Activated CD8-positive, alpha-beta T cell treated with anti-CD3 and anti-CD28 coated beads for 36 hours (primary cell): ENCODE measurements at regions of chr19 and their contacts with region 1.

Region 1: GRCh38 chr19:51020988-51021651 is 1.6 kb upstream of the KLK10 start:
- DNase-seq: peak; percentile 38
- ATAC-seq: no peak
- H3K4me3 Mint-ChIP-seq: no peak overlapping the region
- H3K27ac Mint-ChIP-seq: no peak overlapping the region
- H3K4me1 Mint-ChIP-seq: peaks cover 14% of the 10 kb centered on the region
- H3K27me3 Mint-ChIP-seq: peaks cover 53% of the 10 kb centered on the region
- CTCF ChIP-seq: peak; percentile 55

Region 2: GRCh38 chr19:50912727-50913716 is 108.1 kb before region 1 on chr19:
- CTCF ChIA-PET with region 1: no interaction called
- POLR2A ChIA-PET with region 1: no interaction called
- intact Hi-C with region 1: no loop called
- DNase-seq: peak; percentile 70
- ATAC-seq: peak; percentile 72
- H3K4me3 Mint-ChIP-seq: no peak overlapping the region
- H3K27ac Mint-ChIP-seq: no peak overlapping the region
- H3K4me1 Mint-ChIP-seq: peaks cover 8% of the 10 kb centered on the region
- H3K27me3 Mint-ChIP-seq: peaks cover 38% of the 10 kb centered on the region
- CTCF ChIP-seq: no peak

Region 3: DNA sequence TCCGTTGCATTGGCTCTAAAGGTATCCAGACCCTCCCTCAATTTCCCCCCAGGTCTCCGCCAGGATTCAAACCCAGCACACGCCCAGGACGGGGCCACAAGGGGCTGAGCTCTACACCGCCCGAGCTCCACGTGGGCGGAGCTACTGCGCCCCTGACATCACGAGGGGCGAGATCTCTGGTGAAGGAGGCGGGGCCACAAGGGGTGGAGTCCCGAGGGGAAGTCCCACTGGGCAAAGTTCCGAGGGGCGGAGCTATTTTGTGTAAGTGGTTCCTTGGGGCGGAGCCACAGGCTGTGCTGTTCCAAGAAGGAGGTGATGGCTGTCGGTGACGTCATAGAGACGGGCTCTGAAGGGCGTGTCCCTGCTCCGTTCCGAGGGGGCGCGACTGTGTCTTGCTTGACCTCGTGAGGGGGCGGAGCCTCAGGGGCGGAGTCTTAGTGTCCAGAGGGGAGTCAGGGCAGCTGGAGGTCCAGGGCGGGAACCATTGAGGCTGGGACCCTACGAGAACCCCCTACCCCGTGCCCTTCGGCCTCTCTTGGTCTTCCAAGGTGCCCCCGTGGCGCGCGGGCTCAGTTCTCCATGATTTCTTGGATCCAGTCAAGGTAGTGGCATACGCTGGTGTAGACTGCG is 18.5 kb before region 1 on chr19:
- CTCF ChIA-PET with region 1: no interaction called
- POLR2A ChIA-PET with region 1: no interaction called
- intact Hi-C with region 1: no loop called
- DNase-seq: peak; percentile 60
- ATAC-seq: peak; percentile 84
- H3K4me3 Mint-ChIP-seq: no peak overlapping the region
- H3K27ac Mint-ChIP-seq: no peak overlapping the region
- H3K4me1 Mint-ChIP-seq: no peaks in the 10 kb centered on the region
- H3K27me3 Mint-ChIP-seq: peaks cover 40% of the 10 kb centered on the region
- CTCF ChIP-seq: no peak

Region 4: DNA sequence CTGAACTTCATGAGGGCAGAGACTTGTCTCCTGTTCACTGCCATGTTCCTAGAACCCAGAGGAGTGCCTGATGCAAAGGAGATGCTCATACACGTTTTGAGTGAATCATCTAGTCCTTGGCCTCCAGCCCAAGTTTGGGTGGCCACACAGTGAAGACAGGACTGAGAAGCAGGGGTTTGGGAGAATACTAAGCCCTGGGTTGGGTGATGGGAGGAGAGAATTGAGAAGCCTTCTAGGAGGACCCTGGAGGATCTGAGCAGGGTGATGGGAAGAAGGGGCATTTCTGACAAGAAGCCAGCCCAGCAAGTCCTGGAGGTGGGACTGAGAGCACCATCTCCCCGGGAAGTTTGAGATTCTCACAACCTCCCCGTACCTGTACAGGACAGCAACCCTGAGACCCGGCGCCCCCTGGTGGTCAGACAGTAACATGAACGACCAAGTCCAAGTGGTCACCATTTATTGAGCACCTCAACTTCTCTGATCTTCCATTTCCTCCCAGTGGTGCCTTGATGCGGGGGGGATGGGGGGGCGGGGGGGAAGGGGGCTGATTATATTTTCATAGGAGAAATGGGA is 76.1 kb after region 1 on chr19:
- CTCF ChIA-PET with region 1: interaction called, 12 read pairs
- POLR2A ChIA-PET with region 1: interaction called, 3 read pairs
- intact Hi-C with region 1: loop called (anchors 5 kb)
- DNase-seq: peak; percentile 74
- ATAC-seq: peak; percentile 72
- H3K4me3 Mint-ChIP-seq: no peak overlapping the region
- H3K27ac Mint-ChIP-seq: peak overlapping the region; percentile 51
- H3K4me1 Mint-ChIP-seq: peaks cover 14% of the 10 kb centered on the region
- H3K27me3 Mint-ChIP-seq: no peaks in the 10 kb centered on the region
- CTCF ChIP-seq: peak; percentile 54